Uterus (tissue), 4 donors: ENCODE measurements at regions of chr20 and their contacts with region 1.

Region 1: DNA sequence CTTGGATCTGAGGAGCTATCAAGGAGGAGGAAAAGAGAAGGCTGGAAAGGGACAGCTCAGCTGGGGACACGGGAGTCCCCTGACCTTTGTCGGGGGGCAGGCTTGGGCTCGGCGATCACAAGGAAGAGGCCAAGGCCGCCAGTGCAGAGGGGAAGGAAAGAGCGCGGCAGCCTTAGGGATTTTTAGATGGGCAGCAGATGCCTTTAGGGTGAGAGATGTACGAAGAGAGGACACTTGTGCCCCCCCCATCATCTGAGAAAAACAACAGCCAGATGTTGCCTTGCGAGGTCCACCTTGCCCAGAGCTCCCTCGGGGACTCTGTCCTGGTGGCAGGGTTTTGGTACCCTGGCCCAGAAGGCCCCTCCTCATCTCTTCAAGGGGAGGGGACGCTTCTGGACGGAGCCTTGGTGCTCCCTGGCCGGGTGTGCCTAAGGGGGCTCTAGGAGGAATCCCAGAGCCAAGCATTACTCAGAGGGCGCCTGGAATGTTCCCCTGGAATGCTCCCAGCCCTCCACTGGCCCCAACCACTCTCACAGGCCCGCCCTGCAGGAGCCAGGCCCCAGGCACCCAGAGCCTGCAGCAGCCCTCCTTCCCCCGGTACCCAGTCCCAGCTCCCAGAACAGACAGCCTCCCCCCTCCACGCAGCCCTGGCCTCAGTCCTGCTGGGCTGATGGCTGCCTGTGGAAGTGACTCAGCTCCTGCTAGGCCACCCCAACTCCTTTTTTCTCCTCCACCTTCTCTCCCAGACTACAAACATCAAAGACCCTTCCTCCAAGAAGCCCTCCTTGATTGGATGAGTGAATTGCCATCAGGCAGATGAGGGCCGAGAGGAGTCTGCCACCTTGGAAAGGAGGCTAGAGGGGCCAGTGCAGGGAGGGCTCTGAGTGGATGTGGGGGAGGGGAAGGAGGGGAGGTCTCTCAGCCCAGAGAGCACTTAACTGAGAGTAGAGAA is 1.8 kb downstream of the ADAM33 start:
- DNase-seq: peak; percentile 87 to 89
- H3K4me3 ChIP-seq: peak overlapping the region; percentile 62 to 65
- H3K27ac ChIP-seq: peak overlapping the region; percentile 97 to 98
- H3K4me1 ChIP-seq: peaks cover 8 to 20% of the 10 kb centered on the region in 2 donors
- H3K27me3 ChIP-seq: no peaks in the 10 kb centered on the region
- CTCF ChIP-seq: no peak
- POLR2A ChIP-seq: peak in 1 of 2 donors; percentile 11

Region 2: DNA sequence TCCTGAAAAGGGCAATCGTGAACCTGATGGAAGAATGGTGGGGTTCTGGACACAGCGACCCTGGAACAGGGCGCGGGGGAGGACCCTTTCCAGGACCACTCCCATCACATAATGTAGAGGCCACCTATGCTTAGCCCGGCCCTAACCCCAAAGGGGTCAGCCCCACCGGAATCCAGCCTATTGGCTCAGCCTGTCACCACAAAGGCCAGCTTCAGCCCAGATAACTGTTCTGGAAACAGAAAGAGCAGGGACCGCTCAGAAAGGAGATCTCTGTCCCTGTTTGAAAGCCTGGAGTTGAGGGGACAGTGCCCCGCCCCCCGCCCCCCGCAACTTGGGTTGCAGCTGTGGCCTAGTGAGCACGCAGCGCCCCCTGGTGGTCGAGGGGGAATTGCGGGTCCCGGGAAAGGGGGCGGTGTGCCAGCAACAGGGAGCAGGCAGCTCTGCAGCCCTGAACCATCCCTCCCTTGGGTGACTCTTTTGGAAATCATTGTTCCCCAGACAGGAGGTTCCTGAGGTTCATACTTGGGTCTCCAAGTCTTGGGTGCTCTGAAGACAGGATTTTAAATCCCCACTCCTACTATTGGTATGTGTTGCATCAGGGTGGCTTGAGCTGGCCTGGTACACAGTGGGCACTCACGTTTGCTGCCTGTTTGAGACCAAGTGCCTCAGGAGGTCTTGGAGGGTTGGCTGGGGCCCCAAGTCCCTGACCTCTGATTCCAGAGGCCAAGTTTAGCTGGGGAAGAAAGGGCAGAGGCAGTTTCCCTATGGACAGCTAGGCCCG is 30.9 kb after region 1 on chr20:
- intact Hi-C with region 1: loop called (anchors 2 kb)
- DNase-seq: peak; percentile 77 to 85
- H3K4me3 ChIP-seq: no peak overlapping the region
- H3K27ac ChIP-seq: no peak overlapping the region
- H3K4me1 ChIP-seq: no peaks in the 10 kb centered on the region
- H3K27me3 ChIP-seq: no peaks in the 10 kb centered on the region
- CTCF ChIP-seq: peak; percentile 96 to 99 (median 98)
- POLR2A ChIP-seq: peak in 1 of 2 donors; percentile 36

Region 3: GRCh38 chr20:3767427-3768341 is 87.7 kb after region 1 on chr20 and contains the start of gene ADISSP:
- intact Hi-C with region 1: loop called (anchors 5 kb)
- DNase-seq: peak; percentile 98 to 99
- H3K4me3 ChIP-seq: peak within 1 kb of the TSS; percentile 59 to 82
- H3K27ac ChIP-seq: peak within 1 kb of the TSS; percentile 86 to 92
- H3K4me1 ChIP-seq: peaks cover 0 to 11% of the 10 kb centered on the region in 2 donors
- H3K27me3 ChIP-seq: no peaks in the 10 kb centered on the region
- CTCF ChIP-seq: peak in 1 of 4 experiments; percentile 37
- POLR2A ChIP-seq: peak; percentile 47 to 75
- total RNA-seq, gene ADISSP: 4.1 to 45.9 (median 34.8) TPM

Region 4: GRCh38 chr20:3777716-3778629 is 97.9 kb after region 1 on chr20:
- intact Hi-C with region 1: no loop called
- DNase-seq: peak; percentile 70 to 75
- H3K4me3 ChIP-seq: peak overlapping the region; percentile 41 to 46
- H3K27ac ChIP-seq: peak overlapping the region; percentile 34 to 50
- H3K4me1 ChIP-seq: peaks cover 0 to 14% of the 10 kb centered on the region in 2 donors
- H3K27me3 ChIP-seq: no peaks in the 10 kb centered on the region
- CTCF ChIP-seq: peak in 1 of 4 experiments; percentile 16
- POLR2A ChIP-seq: no peak

Region 5: DNA sequence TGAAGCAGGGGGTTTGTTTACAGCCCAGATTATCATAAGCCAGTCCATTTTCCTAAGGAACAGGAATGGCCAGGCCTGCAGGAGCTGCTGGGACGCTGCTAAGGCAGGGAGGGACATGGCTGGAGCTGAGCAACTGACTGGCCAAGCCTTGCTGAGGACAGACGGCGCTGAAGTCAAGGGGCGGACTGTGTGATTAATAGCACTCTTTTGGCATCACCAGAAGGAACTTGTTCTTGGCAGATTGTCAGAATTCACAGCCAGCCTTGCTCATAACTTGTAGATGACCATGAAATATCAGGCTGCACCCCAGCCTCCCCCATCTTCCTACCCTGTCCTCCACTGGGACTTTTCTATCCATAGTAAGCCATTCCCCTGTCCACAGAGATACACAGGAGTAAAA is 554.1 kb after region 1 on chr20:
- intact Hi-C with region 1: no loop called
- DNase-seq: peak; percentile 47 to 74
- H3K4me3 ChIP-seq: no peak overlapping the region
- H3K27ac ChIP-seq: peak overlapping the region in 1 of 2 donors; percentile 76
- H3K4me1 ChIP-seq: peaks cover 0 to 6% of the 10 kb centered on the region in 2 donors
- H3K27me3 ChIP-seq: no peaks in the 10 kb centered on the region
- CTCF ChIP-seq: no peak
- POLR2A ChIP-seq: no peak